ENCODE measurements at regions of chr1 and their contacts with region 1.

Region 1: DNA sequence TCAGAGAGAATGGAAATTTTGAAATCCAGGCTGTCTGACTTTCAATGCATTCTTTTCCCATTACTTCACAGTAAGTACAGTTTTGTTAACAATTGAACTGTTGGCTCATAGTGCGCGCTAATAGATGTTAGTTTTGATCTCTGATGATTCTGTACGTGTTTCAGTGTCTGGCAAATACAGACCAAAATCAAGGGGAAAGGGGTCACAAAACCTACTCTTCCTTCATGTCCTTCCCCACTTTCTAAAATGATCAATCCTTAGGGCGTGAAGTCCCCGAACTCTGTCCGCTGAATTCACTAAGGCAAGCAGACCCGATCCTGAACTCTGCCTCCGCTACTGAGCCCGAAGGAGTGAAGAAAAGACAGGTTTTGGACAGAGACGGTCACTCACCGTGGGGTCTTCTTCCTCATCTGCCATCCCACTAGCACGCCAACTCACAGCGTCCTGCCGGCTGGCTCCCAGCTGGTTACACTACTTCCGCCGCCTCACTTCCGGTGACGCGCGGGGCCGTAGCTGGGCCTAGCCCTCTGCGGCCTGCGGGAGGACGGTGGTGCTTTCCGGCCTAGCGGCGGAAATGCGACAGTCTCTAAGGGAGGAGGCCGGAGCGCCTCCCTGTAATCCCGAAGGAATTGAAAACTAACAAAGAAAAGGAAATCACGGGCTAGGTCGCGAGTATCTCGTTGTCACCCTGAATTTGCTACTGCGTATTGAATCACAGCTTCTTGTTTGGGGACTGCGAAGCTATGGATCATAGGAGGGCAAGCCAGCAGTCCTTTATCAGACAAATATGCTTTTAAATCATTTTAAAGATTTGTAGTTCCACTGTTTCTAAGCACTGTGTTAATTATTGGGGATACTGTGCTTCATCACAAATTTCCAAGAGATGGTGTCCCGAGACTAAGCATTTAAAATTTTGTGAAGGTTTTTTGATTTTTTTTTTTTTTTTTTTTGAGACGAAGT is at the start of gene TAF13:
- DNase-seq: peak; percentile 95
- ATAC-seq: peak; percentile 99
- H3K4me3 ChIP-seq: peak within 1 kb of the TSS; percentile 63 to 98 (median 92)
- H3K4me3 Mint-ChIP-seq: peak within 1 kb of the TSS; percentile 99
- H3K27ac ChIP-seq: peak within 1 kb of the TSS; percentile 95 to 98
- H3K27ac Mint-ChIP-seq: peak within 1 kb of the TSS; percentile 97
- H3K4me1 ChIP-seq: peaks cover 12 to 13% of the 10 kb centered on the region in 2 donors
- H3K4me1 Mint-ChIP-seq: peaks cover 17% of the 10 kb centered on the region
- H3K27me3 ChIP-seq: no peaks in the 10 kb centered on the region
- H3K27me3 Mint-ChIP-seq: no peaks in the 10 kb centered on the region
- CTCF ChIP-seq: no peak
- total RNA-seq, gene TAF13: 12.9 and 14.3 TPM in 2 replicates

Region 2: GRCh38 chr1:108913105-108913948 is 162.5 kb before region 1 on chr1:
- CTCF ChIA-PET with region 1: no interaction called
- POLR2A ChIA-PET with region 1: no interaction called
- intact Hi-C with region 1: no loop called
- DNase-seq: no peak
- ATAC-seq: no peak
- H3K4me3 ChIP-seq: no peak overlapping the region
- H3K4me3 Mint-ChIP-seq: no peak overlapping the region
- H3K27ac ChIP-seq: no peak overlapping the region
- H3K27ac Mint-ChIP-seq: no peak overlapping the region
- H3K4me1 ChIP-seq: no peaks in the 10 kb centered on the region
- H3K4me1 Mint-ChIP-seq: no peaks in the 10 kb centered on the region
- H3K27me3 ChIP-seq: no peaks in the 10 kb centered on the region
- H3K27me3 Mint-ChIP-seq: no peaks in the 10 kb centered on the region
- CTCF ChIP-seq: no peak

Region 3: DNA sequence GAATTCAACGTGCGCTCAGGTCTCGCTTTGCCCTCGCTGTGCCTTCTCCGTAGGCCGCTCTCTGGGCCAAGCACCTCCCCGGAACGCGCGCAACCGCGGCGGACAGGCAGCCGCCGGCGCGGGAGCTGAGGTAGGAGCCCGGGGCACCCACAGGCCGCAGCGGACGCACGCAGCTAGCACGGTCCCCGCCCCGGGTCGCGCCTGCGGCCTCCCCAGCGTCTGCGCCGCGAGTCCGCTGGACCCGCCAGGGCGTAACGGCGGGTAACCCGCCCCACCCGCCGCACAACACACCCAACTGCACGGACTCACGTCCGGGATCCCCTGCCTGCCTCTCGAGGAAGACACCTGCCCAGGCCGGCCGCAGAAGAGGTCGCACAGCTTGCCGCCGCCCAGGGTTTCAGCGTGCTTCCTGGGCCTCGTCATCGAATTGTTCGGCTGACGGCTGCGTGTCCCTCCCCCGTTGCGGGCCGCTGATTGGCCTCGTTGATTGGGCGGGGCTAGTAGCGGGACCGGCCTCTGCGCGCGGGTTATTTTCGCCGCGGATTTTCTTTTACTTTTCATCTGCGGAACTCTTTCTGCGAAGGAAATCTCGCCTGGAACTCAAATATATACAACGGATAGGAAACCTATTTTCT is 112.6 kb before region 1 on chr1 and contains the start of gene CLCC1:
- CTCF ChIA-PET with region 1: no interaction called
- POLR2A ChIA-PET with region 1: interaction called, 3 read pairs
- intact Hi-C with region 1: loop called (anchors 1 kb)
- DNase-seq: peak; percentile 97
- ATAC-seq: peak; percentile 91
- H3K4me3 ChIP-seq: peak within 1 kb of the TSS; percentile 56 to 94 (median 76)
- H3K4me3 Mint-ChIP-seq: peak within 1 kb of the TSS; percentile 91
- H3K27ac ChIP-seq: peak within 1 kb of the TSS; percentile 86 to 94
- H3K27ac Mint-ChIP-seq: peak within 1 kb of the TSS; percentile 95
- H3K4me1 ChIP-seq: peaks cover 16 to 17% of the 10 kb centered on the region in 2 donors
- H3K4me1 Mint-ChIP-seq: peaks cover 30% of the 10 kb centered on the region
- H3K27me3 ChIP-seq: no peaks in the 10 kb centered on the region
- H3K27me3 Mint-ChIP-seq: no peaks in the 10 kb centered on the region
- CTCF ChIP-seq: no peak
- total RNA-seq, gene CLCC1: 26.9 and 29.5 TPM in 2 replicates